ENCODE measurements at regions of chr12 and their contacts with region 1.

Region 1: GRCh38 chr12:55829967-55830600 is 697 bp upstream of the DNAJC14 start:
- DNase-seq: peak; percentile 52
- ATAC-seq: peak; percentile 37
- H3K4me3 Mint-ChIP-seq: peak overlapping the region; percentile 99
- H3K27ac Mint-ChIP-seq: peak overlapping the region; percentile 97
- H3K4me1 Mint-ChIP-seq: peaks cover 46% of the 10 kb centered on the region
- H3K27me3 Mint-ChIP-seq: no peaks in the 10 kb centered on the region

Region 2: DNA sequence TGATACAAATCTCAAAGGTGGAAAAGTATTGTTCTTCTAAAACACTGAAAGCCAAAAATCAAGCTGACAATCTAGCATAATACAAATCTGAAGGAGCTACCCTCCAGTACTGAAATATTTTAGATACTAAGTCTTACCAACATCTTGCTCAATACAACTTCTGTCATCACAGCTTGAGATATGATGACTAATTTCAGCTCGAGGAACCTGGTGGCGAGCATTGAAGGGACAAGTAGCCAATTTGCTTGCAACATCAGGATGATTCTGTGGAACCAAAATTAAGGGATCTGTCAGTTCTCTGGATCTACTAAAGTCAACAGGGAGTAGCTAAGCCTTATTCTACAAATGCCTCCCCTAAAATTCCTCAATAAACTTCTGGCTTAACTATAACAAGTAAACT is 1367.0 kb before region 1 on chr12:
- CTCF ChIA-PET with region 1: no interaction called
- POLR2A ChIA-PET with region 1: no interaction called
- intact Hi-C with region 1: no loop called
- DNase-seq: peak; percentile 9
- ATAC-seq: no peak
- H3K4me3 Mint-ChIP-seq: no peak overlapping the region
- H3K27ac Mint-ChIP-seq: no peak overlapping the region
- H3K4me1 Mint-ChIP-seq: peaks cover 7% of the 10 kb centered on the region
- H3K27me3 Mint-ChIP-seq: peaks cover 5% of the 10 kb centered on the region

Region 3: DNA sequence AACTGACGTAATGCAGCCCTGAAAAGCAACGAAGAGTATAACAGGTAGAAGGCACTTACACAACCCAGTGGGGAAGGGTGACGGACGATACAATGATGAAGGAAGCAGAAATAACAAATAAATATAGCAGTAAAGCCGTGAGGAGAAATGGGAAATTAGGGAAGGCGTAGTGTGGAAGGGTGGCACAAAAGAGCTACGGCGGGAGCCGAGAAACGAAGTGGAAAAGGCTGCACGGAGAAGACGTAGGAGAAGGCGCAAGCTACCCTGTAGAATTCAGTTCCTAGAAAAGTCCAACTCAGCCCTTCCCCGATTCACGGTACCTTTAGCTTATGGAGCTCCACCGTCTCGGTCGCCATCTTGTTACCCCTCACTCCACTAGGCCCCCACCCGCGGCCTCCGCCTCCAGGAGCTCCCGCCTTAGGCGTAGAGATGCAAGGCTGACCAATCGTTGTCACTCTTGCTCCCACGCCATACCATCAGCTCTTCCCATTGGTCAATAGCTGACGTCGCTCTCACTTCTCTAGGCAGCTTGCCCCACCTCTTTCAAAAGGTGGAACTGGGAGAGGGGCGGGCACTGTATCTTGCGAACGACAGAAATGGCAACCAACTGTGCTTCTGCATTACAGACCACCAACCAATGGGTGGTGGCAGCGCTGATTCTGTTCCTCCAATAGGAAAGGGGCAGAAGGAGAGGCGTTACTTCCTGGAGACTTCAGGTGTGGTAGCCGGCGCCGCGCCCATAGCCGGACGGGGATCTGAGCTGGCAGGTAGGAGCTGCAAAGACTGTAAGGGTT is 12.5 kb before region 1 on chr12 and contains the starts of genes ORMDL2 and SARNP:
- CTCF ChIA-PET with region 1: interaction called, 18 read pairs
- POLR2A ChIA-PET with region 1: interaction called, 43 read pairs
- intact Hi-C with region 1: loop called (anchors 1 kb)
- DNase-seq: peak; percentile 97
- ATAC-seq: peak; percentile 98
- H3K4me3 Mint-ChIP-seq: no peak within 1 kb of the TSS
- H3K27ac Mint-ChIP-seq: no peak within 1 kb of the TSS
- H3K4me1 Mint-ChIP-seq: peaks cover 49% of the 10 kb centered on the region
- H3K27me3 Mint-ChIP-seq: no peaks in the 10 kb centered on the region
- total RNA-seq, gene ORMDL2: 29.4 to 35.6 TPM
- total RNA-seq, gene SARNP: 111 to 114 TPM

Region 4: GRCh38 chr12:55899082-55899481 is 69.0 kb after region 1 on chr12:
- CTCF ChIA-PET with region 1: no interaction called
- POLR2A ChIA-PET with region 1: no interaction called
- intact Hi-C with region 1: loop called in 1 of 2 experiments (anchors 2 kb)
- DNase-seq: peak; percentile 67
- ATAC-seq: peak; percentile 97
- H3K4me3 Mint-ChIP-seq: no peak overlapping the region
- H3K27ac Mint-ChIP-seq: peak overlapping the region; percentile 79
- H3K4me1 Mint-ChIP-seq: peaks cover 9% of the 10 kb centered on the region
- H3K27me3 Mint-ChIP-seq: no peaks in the 10 kb centered on the region

Region 5: DNA sequence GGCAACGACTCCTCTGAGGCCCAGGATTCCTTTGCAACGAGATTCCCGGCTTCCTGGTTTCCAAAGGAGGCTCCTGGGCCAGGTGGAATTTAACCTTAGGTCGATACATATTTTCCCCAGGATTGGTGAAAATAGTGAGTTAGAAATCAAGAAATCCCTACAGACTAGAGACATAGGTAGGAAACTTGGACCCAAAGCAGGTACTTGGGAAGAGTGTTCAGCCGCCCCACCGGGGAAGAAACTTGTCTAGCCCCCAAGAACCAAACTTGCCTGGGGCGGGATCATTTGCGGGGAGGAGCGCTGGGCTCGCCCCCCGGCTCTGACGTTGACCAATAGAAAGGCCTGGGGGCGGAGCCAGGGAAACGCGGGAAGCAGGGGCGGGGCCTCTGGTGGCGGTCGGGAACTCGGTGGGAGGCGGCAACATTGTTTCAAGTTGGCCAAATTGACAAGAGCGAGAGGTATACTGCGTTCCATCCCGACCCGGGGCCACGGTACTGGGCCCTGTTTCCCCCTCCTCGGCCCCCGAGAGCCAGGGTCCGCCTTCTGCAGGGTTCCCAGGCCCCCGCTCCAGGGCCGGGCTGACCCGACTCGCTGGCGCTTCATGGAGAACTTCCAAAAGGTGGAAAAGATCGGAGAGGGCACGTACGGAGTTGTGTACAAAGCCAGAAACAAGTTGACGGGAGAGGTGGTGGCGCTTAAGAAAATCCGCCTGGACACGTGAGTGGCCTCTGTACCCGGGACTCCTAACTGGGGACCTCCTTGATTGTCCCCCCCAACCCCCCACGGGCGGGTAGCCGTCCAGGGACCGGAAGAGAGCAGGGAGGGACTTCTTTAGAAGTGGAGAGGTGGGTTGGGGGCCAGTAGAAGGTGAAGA is 136.6 kb after region 1 on chr12 and contains the start of gene CDK2:
- CTCF ChIA-PET with region 1: no interaction called
- POLR2A ChIA-PET with region 1: no interaction called
- intact Hi-C with region 1: loop called in 1 of 2 experiments (anchors 1 kb)
- DNase-seq: peak; percentile 94
- ATAC-seq: peak; percentile 98
- H3K4me3 Mint-ChIP-seq: peak within 1 kb of the TSS; percentile 99
- H3K27ac Mint-ChIP-seq: peak within 1 kb of the TSS; percentile 94
- H3K4me1 Mint-ChIP-seq: peaks cover 30% of the 10 kb centered on the region
- H3K27me3 Mint-ChIP-seq: no peaks in the 10 kb centered on the region
- total RNA-seq, gene CDK2: 104 to 149 TPM

Region 6: GRCh38 chr12:56007564-56008559 is 177.8 kb after region 1 on chr12:
- CTCF ChIA-PET with region 1: no interaction called
- POLR2A ChIA-PET with region 1: interaction called, 3 read pairs
- intact Hi-C with region 1: loop called in 1 of 2 experiments (anchors 1 kb)
- DNase-seq: peak; percentile 82
- ATAC-seq: peak; percentile 83
- H3K4me3 Mint-ChIP-seq: peak overlapping the region; percentile 78
- H3K27ac Mint-ChIP-seq: peak overlapping the region; percentile 92
- H3K4me1 Mint-ChIP-seq: peaks cover 28% of the 10 kb centered on the region
- H3K27me3 Mint-ChIP-seq: no peaks in the 10 kb centered on the region

Region 7: GRCh38 chr12:56152318-56153033 is 322.4 kb after region 1 on chr12 and contains the start of gene MYL6B:
- CTCF ChIA-PET with region 1: no interaction called
- POLR2A ChIA-PET with region 1: no interaction called
- intact Hi-C with region 1: loop called in 1 of 2 experiments (anchors 1 kb)
- DNase-seq: peak; percentile 98
- ATAC-seq: peak; percentile 92
- H3K4me3 Mint-ChIP-seq: peak within 1 kb of the TSS; percentile 88
- H3K27ac Mint-ChIP-seq: peak within 1 kb of the TSS; percentile 99
- H3K4me1 Mint-ChIP-seq: peaks cover 29% of the 10 kb centered on the region
- H3K27me3 Mint-ChIP-seq: no peaks in the 10 kb centered on the region
- total RNA-seq, gene MYL6B: 76.3 to 79.3 TPM